Activated CD4-positive, alpha-beta T cell treated with anti-CD3 and anti-CD28 coated beads, Interleukin-2, amount 10 ng/mL, durations not matched to agents 24 days and 14 days (primary cell): ENCODE measurements at regions of chr18 and their contacts with region 1.

Region 1: DNA sequence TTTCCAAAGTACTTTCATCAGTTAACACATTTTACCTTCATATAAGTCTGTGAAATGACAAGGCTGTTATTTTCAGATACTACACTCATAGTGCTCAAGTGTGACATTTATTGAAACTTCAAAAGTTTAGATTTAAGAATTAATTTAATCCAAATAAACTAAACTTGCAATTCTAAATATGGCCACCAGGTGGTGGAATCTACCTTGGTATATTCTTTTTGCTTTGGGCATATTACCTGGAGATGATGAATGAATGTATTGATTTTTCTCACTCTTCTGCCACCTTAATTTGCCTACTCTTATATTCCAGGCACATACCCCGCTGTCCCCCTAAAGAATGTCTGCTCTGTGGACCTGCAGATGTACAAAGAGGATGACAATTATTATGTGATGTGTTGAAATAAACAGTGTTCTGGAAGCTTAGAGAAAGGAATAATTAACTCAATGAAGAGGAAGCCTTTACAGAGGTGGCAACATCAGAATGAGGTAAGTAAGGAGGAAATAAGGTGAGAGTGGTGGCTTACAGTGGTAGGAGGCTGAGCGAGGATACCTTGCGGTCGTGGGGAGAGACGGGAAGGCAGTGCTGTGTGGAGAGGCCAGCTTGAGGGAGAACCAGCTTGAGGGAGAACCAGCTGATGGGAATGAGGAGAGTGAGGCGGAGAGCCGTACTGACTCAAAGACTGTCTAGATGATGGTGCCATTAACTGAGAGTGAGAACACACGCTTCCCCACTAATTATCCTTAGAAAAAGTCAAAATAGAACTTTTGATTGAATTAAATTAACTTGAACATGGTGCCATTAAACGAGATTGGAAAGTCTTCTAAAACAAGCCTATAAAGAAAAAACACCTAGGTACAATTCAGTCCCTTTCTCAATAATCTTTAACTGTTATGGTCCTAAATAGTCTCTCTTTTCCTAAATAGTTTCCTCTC is 179.5 kb downstream of the CELF4 start:
- DNase-seq: peak; percentile 58
- H3K4me3 Mint-ChIP-seq: no peak overlapping the region
- H3K27ac Mint-ChIP-seq: no peak overlapping the region
- H3K4me1 Mint-ChIP-seq: no peaks in the 10 kb centered on the region
- H3K27me3 Mint-ChIP-seq: peaks cover 4% of the 10 kb centered on the region

Region 2: GRCh38 chr18:37476182-37476581 is 90.1 kb after region 1 on chr18:
- intact Hi-C with region 1: loop called (anchors 5 kb)
- DNase-seq: peak; percentile 73
- H3K4me3 Mint-ChIP-seq: no peak overlapping the region
- H3K27ac Mint-ChIP-seq: no peak overlapping the region
- H3K4me1 Mint-ChIP-seq: no peaks in the 10 kb centered on the region
- H3K27me3 Mint-ChIP-seq: no peaks in the 10 kb centered on the region

Region 3: GRCh38 chr18:37524498-37525261 is 138.6 kb after region 1 on chr18:
- intact Hi-C with region 1: no loop called
- DNase-seq: no peak
- H3K4me3 Mint-ChIP-seq: no peak overlapping the region
- H3K27ac Mint-ChIP-seq: no peak overlapping the region
- H3K4me1 Mint-ChIP-seq: no peaks in the 10 kb centered on the region
- H3K27me3 Mint-ChIP-seq: peaks cover 39% of the 10 kb centered on the region

Region 4: GRCh38 chr18:37537868-37538525 is 151.9 kb after region 1 on chr18:
- intact Hi-C with region 1: loop called (anchors 2 kb)
- DNase-seq: peak; percentile 83
- H3K4me3 Mint-ChIP-seq: no peak overlapping the region
- H3K27ac Mint-ChIP-seq: no peak overlapping the region
- H3K4me1 Mint-ChIP-seq: no peaks in the 10 kb centered on the region
- H3K27me3 Mint-ChIP-seq: peaks cover 8% of the 10 kb centered on the region